B cell (primary cell): ENCODE measurements at regions of chr17 and their contacts with region 1.

Region 1: GRCh38 chr17:75589012-75589918 is 1.7 kb downstream of the MYO15B start:
- DNase-seq: peak; percentile 95
- ATAC-seq: peak; percentile 84
- H3K4me3 ChIP-seq: peak overlapping the region in 4 of 5 experiments; percentile 80 to 95 (median 84)
- H3K4me3 Mint-ChIP-seq: peak overlapping the region; percentile 86
- H3K27ac ChIP-seq: peak overlapping the region; percentile 80 to 89
- H3K27ac Mint-ChIP-seq: peak overlapping the region; percentile 81
- H3K4me1 ChIP-seq: peaks cover 4 to 20% of the 10 kb centered on the region in 2 donors
- H3K4me1 Mint-ChIP-seq: peaks cover 19% of the 10 kb centered on the region
- H3K27me3 ChIP-seq: no peaks in the 10 kb centered on the region
- H3K27me3 Mint-ChIP-seq: no peaks in the 10 kb centered on the region
- CTCF ChIP-seq: peak; percentile 59

Region 2: DNA sequence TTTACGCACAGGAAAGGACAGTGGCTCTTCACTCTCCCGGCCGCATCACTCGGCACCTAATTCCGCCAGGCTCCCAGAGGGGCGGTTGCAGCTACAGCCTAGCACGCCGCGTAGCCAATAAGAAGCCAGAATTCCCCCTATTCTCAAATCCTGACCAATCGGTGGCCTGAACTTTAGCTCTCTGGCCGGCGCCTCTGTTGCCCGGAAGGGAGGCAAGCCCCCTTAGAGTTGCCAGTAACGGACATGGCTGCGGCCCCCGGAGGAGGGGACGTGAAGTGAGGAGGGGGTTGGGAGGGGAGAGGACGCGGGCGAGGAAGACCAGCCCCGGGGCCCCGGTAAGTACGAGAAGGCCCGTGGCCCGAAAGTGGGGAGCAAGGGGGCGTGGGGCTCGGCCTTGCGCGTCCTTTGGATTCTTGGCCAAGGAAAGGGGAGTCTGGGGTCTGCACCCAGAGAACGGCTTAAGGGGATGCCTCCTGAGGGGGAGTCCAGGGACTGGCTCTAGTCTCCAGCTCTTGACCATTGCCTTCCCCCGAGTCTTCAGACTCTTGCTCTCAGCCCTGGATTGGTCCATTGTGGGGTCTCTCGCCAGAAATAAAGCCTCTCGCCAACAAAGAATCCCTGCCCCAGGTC is 132.7 kb before region 1 on chr17 and contains the start of gene TMEM94:
- CTCF ChIA-PET with region 1: interaction called, 4 read pairs
- POLR2A ChIA-PET with region 1: no interaction called
- intact Hi-C with region 1: loop called (anchors 1 kb)
- DNase-seq: peak; percentile 97
- ATAC-seq: peak; percentile 98
- H3K4me3 ChIP-seq: peak within 1 kb of the TSS; percentile 75 to 99 (median 84)
- H3K4me3 Mint-ChIP-seq: peak within 1 kb of the TSS; percentile 96
- H3K27ac ChIP-seq: peak within 1 kb of the TSS; percentile 60 to 79
- H3K27ac Mint-ChIP-seq: peak within 1 kb of the TSS; percentile 88
- H3K4me1 ChIP-seq: peaks cover 14 to 20% of the 10 kb centered on the region in 2 donors
- H3K4me1 Mint-ChIP-seq: peaks cover 42% of the 10 kb centered on the region
- H3K27me3 ChIP-seq: no peaks in the 10 kb centered on the region
- H3K27me3 Mint-ChIP-seq: no peaks in the 10 kb centered on the region
- CTCF ChIP-seq: no peak
- total RNA-seq, gene TMEM94: 112 and 139 TPM in 2 replicates

Region 3: DNA sequence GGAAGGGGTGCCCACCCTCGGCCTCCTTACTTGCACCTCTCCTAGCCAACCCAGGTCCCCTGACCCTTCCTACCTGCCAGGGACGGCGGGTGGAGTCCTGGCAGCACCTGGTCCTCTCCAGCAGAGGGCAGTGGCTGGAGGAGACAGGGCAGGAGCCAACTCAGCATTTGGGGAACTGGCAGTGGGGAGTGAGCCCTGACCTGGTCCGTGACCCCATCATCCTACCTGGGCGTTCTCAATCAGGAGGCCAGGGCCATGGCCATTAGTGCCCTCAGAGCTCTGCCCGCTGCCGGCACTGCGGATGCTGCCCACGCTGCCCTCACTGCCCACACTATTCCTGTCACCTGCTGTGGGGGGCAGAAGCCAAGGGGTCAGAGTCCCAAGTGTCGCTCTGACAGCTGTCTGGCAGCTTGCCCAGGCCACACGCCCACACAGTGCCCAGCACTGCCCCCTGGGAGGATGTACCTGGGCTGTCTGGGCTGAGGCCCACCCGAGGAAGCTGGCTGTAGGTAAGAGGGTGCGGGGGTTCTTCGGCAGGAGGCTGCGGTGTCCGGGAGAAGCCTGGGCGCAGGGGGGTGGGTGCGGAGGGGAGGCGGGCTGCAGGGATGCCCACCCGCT is 84.8 kb before region 1 on chr17:
- CTCF ChIA-PET with region 1: interaction called, 9 read pairs
- POLR2A ChIA-PET with region 1: interaction called, 6 read pairs
- intact Hi-C with region 1: loop called (anchors 1 kb)
- DNase-seq: peak; percentile 73
- ATAC-seq: peak; percentile 90
- H3K4me3 ChIP-seq: no peak overlapping the region
- H3K4me3 Mint-ChIP-seq: no peak overlapping the region
- H3K27ac ChIP-seq: no peak overlapping the region
- H3K27ac Mint-ChIP-seq: no peak overlapping the region
- H3K4me1 ChIP-seq: peaks cover 0 to 7% of the 10 kb centered on the region in 2 donors
- H3K4me1 Mint-ChIP-seq: no peaks in the 10 kb centered on the region
- H3K27me3 ChIP-seq: no peaks in the 10 kb centered on the region
- H3K27me3 Mint-ChIP-seq: no peaks in the 10 kb centered on the region
- CTCF ChIP-seq: peak; percentile 67

Region 4: GRCh38 chr17:75524953-75525719 is 64.1 kb before region 1 on chr17 and contains the start of gene LLGL2:
- CTCF ChIA-PET with region 1: interaction called, 11 read pairs
- POLR2A ChIA-PET with region 1: interaction called, 4 read pairs
- intact Hi-C with region 1: loop called (anchors 1 kb)
- DNase-seq: peak; percentile 92
- ATAC-seq: peak; percentile 92
- H3K4me3 ChIP-seq: peak within 1 kb of the TSS; percentile 35 to 80 (median 74)
- H3K4me3 Mint-ChIP-seq: peak within 1 kb of the TSS; percentile 89
- H3K27ac ChIP-seq: peak within 1 kb of the TSS in 1 of 2 donors; percentile 24
- H3K27ac Mint-ChIP-seq: no peak within 1 kb of the TSS
- H3K4me1 ChIP-seq: peaks cover 15 to 18% of the 10 kb centered on the region in 2 donors
- H3K4me1 Mint-ChIP-seq: peaks cover 14% of the 10 kb centered on the region
- H3K27me3 ChIP-seq: peaks cover 0 to 7% (median 0%) of the 10 kb centered on the region in 4 experiments
- H3K27me3 Mint-ChIP-seq: no peaks in the 10 kb centered on the region
- CTCF ChIP-seq: peak; percentile 47
- total RNA-seq, gene LLGL2: 39.7 and 40.6 TPM in 2 replicates

Region 5: GRCh38 chr17:75571197-75571873 is 17.9 kb before region 1 on chr17:
- CTCF ChIA-PET with region 1: interaction called, 9 read pairs
- POLR2A ChIA-PET with region 1: no interaction called
- intact Hi-C with region 1: loop called (anchors 1 kb)
- DNase-seq: peak; percentile 88
- ATAC-seq: peak; percentile 97
- H3K4me3 ChIP-seq: peak overlapping the region in 2 of 5 experiments; percentile 28 to 35
- H3K4me3 Mint-ChIP-seq: peak overlapping the region; percentile 71
- H3K27ac ChIP-seq: peak overlapping the region; percentile 80 to 93
- H3K27ac Mint-ChIP-seq: peak overlapping the region; percentile 96
- H3K4me1 ChIP-seq: peaks cover 24 to 28% of the 10 kb centered on the region in 2 donors
- H3K4me1 Mint-ChIP-seq: peaks cover 23% of the 10 kb centered on the region
- H3K27me3 ChIP-seq: no peaks in the 10 kb centered on the region
- H3K27me3 Mint-ChIP-seq: no peaks in the 10 kb centered on the region
- CTCF ChIP-seq: no peak

Region 6: DNA sequence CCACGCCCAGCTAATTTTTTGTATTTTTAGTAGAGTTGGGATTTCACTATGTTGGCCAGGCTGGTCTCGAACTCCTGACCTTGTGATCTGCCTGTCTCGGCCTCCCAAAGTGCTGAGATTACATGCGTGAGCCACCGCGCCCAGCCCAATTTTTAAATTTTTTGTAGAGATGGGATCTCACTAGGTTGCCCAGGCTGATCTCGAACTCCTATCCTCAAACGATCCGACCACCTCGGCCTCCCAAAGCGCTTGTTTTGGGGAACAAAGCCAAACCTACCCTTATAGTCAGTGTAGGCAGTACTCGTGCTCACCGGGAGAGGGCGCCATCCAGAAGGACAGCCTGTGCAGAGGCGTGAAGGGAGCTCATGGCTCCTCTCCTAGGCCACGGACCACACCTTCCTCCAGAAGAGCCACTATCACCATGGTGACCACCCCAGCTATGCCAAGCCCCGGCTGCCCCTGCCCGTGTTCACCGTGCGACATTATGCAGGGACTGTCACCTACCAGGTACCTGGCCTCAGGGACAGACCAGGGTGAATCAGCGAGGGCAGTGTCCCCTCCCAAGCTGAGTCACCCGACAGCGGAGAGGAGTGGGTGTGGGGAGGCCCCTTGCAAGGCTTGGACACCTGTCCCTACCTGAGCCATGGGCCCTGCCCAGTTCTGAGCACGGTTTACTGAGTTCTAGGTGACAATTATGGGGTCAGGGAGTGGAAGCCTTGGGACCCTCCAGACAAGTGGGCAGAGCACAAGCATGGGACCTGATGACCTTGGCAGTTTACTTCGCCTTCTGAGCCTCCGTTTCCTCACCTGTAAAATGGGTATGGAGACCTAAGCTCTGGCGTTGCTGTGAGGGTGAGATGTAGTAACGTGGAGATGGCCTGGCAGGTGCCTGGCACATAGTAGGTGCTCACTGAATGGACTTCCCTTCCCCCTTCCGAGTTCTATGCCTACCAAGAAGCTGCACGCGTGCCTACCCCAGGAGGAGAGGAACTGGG is 12.1 kb after region 1 on chr17:
- CTCF ChIA-PET with region 1: interaction called, 13 read pairs
- POLR2A ChIA-PET with region 1: no interaction called
- intact Hi-C with region 1: no loop called
- DNase-seq: peak; percentile 68
- ATAC-seq: peak; percentile 77
- H3K4me3 ChIP-seq: no peak overlapping the region
- H3K4me3 Mint-ChIP-seq: no peak overlapping the region
- H3K27ac ChIP-seq: no peak overlapping the region
- H3K27ac Mint-ChIP-seq: no peak overlapping the region
- H3K4me1 ChIP-seq: no peaks in the 10 kb centered on the region
- H3K4me1 Mint-ChIP-seq: no peaks in the 10 kb centered on the region
- H3K27me3 ChIP-seq: no peaks in the 10 kb centered on the region
- H3K27me3 Mint-ChIP-seq: no peaks in the 10 kb centered on the region
- CTCF ChIP-seq: peak; percentile 76

Region 7: DNA sequence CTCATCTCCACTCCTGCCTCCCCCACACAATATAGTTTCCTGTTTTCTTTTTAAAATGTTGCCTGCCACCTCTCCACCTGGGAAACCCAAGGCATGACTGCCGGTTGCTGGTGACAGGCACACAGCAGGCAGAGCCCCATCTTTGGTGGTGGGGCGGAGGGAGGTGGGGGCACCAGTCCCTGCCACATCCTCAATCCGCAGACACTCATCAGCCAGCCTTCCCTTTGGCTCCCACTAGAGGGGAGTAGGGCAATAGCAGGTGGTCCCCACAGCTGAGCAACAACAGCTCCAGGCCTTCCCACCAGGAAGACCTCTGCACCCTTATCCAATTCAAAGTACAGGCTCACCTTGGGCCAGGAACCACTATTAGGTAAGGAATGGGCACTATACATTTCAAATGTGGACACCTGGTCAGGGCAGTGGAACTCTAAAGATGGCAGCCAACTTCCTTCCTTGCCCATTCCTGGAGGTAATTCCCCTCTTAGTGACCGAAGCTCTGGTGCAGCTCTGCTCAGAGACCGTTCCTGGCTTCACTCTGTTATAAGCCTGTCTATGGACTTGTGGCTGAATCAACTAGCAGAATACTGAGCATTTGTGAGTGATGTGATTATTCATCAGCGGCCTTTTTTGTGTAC is 63.8 kb after region 1 on chr17:
- CTCF ChIA-PET with region 1: no interaction called
- POLR2A ChIA-PET with region 1: no interaction called
- intact Hi-C with region 1: no loop called
- DNase-seq: peak; percentile 59
- ATAC-seq: peak; percentile 81
- H3K4me3 ChIP-seq: no peak overlapping the region
- H3K4me3 Mint-ChIP-seq: no peak overlapping the region
- H3K27ac ChIP-seq: no peak overlapping the region
- H3K27ac Mint-ChIP-seq: peak overlapping the region; percentile 20
- H3K4me1 ChIP-seq: peaks cover 6 to 8% of the 10 kb centered on the region in 2 donors
- H3K4me1 Mint-ChIP-seq: peaks cover 7% of the 10 kb centered on the region
- H3K27me3 ChIP-seq: no peaks in the 10 kb centered on the region
- H3K27me3 Mint-ChIP-seq: no peaks in the 10 kb centered on the region
- CTCF ChIP-seq: peak; percentile 73

Region 8: DNA sequence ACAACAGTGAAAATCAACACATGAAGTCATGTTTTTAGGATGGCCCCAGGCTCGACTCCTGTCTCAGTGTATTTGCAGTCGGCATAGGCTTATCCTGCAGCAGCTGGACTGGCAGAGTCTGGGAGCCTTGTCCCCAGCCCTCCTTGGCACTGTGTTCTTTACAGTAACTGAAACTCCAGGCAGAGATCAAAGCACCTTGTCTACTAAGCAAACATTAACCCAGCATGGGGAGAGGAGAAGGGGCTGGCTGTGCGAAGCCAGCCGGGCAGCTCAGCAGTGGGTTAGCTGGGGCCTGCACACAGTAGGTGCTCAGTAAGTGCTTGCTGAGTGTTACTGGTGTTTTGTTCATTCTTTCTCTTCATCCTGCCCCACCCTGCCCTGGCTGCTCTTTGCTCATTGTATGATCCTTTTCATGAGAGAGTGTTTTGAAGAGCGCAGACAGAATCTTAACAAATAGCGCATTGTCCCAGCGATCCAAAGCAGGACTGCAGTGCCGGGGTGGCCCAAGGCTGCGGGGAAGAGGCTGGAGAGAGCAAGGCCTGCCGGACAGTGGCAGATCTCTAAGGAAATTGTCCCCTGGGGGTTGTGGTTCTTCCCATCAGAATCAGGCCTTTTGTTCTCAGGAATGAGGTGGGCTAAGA is 108.5 kb after region 1 on chr17:
- CTCF ChIA-PET with region 1: no interaction called
- POLR2A ChIA-PET with region 1: no interaction called
- intact Hi-C with region 1: no loop called
- DNase-seq: no peak
- ATAC-seq: no peak
- H3K4me3 ChIP-seq: no peak overlapping the region
- H3K4me3 Mint-ChIP-seq: no peak overlapping the region
- H3K27ac ChIP-seq: no peak overlapping the region
- H3K27ac Mint-ChIP-seq: no peak overlapping the region
- H3K4me1 ChIP-seq: no peaks in the 10 kb centered on the region
- H3K4me1 Mint-ChIP-seq: no peaks in the 10 kb centered on the region
- H3K27me3 ChIP-seq: no peaks in the 10 kb centered on the region
- H3K27me3 Mint-ChIP-seq: no peaks in the 10 kb centered on the region
- CTCF ChIP-seq: no peak